CD4-positive, alpha-beta memory T cell (primary cell): ENCODE measurements at regions of chr4 and their contacts with region 1.

Region 1: DNA sequence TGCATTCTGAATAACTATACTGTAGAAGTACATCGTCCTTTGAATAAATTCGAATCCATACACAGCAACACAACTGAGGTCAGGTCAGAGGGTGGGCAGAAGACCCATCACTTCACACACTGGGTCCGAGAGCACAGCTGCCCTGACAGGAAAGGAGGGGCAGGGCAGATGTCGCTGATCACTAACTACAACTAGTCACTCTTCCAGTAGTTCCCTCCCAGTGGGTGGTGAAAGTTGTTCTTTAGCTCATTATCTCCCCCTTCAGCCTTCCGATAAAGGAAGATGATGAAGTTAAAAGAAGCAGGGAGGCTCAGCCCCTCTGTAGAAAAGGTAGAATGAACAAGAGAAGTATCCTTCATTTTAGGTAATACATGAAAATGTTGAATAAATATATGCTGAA is 278.9 kb downstream of the INPP4B start:
- DNase-seq: peak; percentile 69 to 74 (median 72)
- H3K4me3 ChIP-seq: peak overlapping the region; percentile 57 to 84
- H3K4me3 Mint-ChIP-seq: peak overlapping the region; percentile 80 to 97 (median 92)
- H3K27ac ChIP-seq: peak overlapping the region; percentile 75
- H3K27ac Mint-ChIP-seq: peak overlapping the region; percentile 86 to 98 (median 96)
- H3K4me1 ChIP-seq: peaks cover 73% of the 10 kb centered on the region
- H3K4me1 Mint-ChIP-seq: peaks cover 40 to 85% (median 50%) of the 10 kb centered on the region in 4 donors
- H3K27me3 ChIP-seq: no peaks in the 10 kb centered on the region
- H3K27me3 Mint-ChIP-seq: no peaks in the 10 kb centered on the region

Region 2: DNA sequence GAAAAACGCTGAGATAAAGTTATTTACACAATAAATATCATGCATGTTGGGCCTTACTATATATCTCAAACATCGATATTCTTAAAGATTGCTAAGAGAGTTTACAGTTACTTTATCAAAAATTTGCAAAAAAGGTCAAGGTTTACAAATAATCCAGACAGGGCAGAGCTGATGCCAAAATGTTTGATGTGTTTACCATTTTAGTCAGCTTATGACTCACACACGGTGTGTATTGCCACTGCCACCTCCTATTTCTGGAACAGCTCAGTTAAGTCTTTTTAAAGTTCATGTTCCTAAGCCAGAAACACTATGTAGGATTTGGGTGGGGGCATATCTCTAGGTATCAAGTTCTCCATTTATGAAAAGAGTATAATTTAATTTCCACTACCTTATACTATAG is 301.7 kb before region 1 on chr4:
- CTCF ChIA-PET with region 1: no interaction called
- POLR2A ChIA-PET with region 1: interaction called, 3 read pairs
- intact Hi-C with region 1: loop called (anchors 5 kb)
- DNase-seq: no peak
- H3K4me3 ChIP-seq: no peak overlapping the region
- H3K4me3 Mint-ChIP-seq: peak overlapping the region in 5 of 8 donors; percentile 13 to 78 (median 46)
- H3K27ac ChIP-seq: no peak overlapping the region
- H3K27ac Mint-ChIP-seq: peak overlapping the region; percentile 33 to 87 (median 78)
- H3K4me1 ChIP-seq: peaks cover 70% of the 10 kb centered on the region
- H3K4me1 Mint-ChIP-seq: peaks cover 63 to 93% (median 78%) of the 10 kb centered on the region in 4 donors
- H3K27me3 ChIP-seq: no peaks in the 10 kb centered on the region
- H3K27me3 Mint-ChIP-seq: no peaks in the 10 kb centered on the region

Region 3: GRCh38 chr4:142372530-142373260 is 194.5 kb before region 1 on chr4:
- CTCF ChIA-PET with region 1: interaction called, 4 read pairs
- POLR2A ChIA-PET with region 1: interaction called, 13 read pairs
- intact Hi-C with region 1: no loop called
- DNase-seq: no peak
- H3K4me3 ChIP-seq: no peak overlapping the region
- H3K4me3 Mint-ChIP-seq: peak overlapping the region in 7 of 8 donors; percentile 8 to 81 (median 61)
- H3K27ac ChIP-seq: peak overlapping the region; percentile 7
- H3K27ac Mint-ChIP-seq: peak overlapping the region; percentile 5 to 88 (median 75)
- H3K4me1 ChIP-seq: peaks cover 98% of the 10 kb centered on the region
- H3K4me1 Mint-ChIP-seq: peaks cover 69 to 86% (median 77%) of the 10 kb centered on the region in 4 donors
- H3K27me3 ChIP-seq: no peaks in the 10 kb centered on the region
- H3K27me3 Mint-ChIP-seq: no peaks in the 10 kb centered on the region

Region 4: GRCh38 chr4:142405021-142405694 is 162.0 kb before region 1 on chr4:
- CTCF ChIA-PET with region 1: interaction called, 24 read pairs
- POLR2A ChIA-PET with region 1: interaction called, 85 read pairs
- intact Hi-C with region 1: loop called (anchors 1 kb)
- DNase-seq: peak; percentile 64 to 81 (median 68)
- H3K4me3 ChIP-seq: peak overlapping the region; percentile 69 to 70
- H3K4me3 Mint-ChIP-seq: peak overlapping the region; percentile 95 to 100 (median 98)
- H3K27ac ChIP-seq: peak overlapping the region; percentile 72
- H3K27ac Mint-ChIP-seq: peak overlapping the region; percentile 91 to 98 (median 95)
- H3K4me1 ChIP-seq: peaks cover 38% of the 10 kb centered on the region
- H3K4me1 Mint-ChIP-seq: peaks cover 26 to 72% (median 36%) of the 10 kb centered on the region in 4 donors
- H3K27me3 ChIP-seq: no peaks in the 10 kb centered on the region
- H3K27me3 Mint-ChIP-seq: no peaks in the 10 kb centered on the region

Region 5: DNA sequence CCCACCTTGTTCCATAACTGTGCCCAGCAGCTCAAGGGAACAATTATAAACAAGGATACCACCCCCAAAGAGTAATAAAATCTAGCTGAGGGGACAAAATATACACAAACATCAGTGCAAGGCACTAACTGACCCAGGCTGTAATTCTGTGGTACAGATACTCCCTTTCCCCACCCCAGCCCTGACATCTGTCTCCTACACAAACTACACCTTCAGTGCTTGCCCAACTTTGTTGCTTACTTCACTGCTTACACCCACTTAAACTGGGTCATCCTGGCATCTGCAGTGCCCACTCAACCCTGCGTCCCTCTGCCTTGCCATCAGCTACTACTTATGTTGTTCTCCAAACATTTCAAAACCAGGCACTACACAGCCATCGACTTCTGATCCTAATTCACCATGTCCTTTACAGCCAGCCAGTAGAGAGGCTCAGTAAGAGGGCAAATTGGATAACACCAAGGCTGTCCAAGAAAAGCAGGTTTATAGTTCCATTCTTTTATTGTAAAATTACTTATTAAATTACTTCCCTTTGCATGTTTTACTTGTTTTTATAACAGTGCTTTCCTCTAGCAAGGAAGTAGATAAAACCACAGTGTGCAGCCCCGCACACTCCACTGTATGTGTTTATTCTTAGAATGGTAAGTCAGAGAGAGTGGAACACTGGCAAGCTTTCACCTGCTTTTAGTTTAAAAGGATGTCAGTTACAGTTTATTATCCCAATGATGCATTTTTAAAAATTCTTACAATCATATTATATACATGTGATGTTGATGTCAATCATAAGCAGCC is 129.3 kb after region 1 on chr4:
- CTCF ChIA-PET with region 1: interaction called, 7 read pairs
- POLR2A ChIA-PET with region 1: interaction called, 166 read pairs
- intact Hi-C with region 1: loop called (anchors 2 kb)
- DNase-seq: peak in 4 of 5 donors; percentile 15 to 26 (median 22)
- H3K4me3 ChIP-seq: peak overlapping the region in 1 of 2 donors; percentile 22
- H3K4me3 Mint-ChIP-seq: peak overlapping the region in 7 of 8 donors; percentile 59 to 86 (median 73)
- H3K27ac ChIP-seq: peak overlapping the region; percentile 34
- H3K27ac Mint-ChIP-seq: peak overlapping the region in 6 of 7 donors; percentile 89 to 98 (median 95)
- H3K4me1 ChIP-seq: peaks cover 69% of the 10 kb centered on the region
- H3K4me1 Mint-ChIP-seq: peaks cover 53 to 69% (median 58%) of the 10 kb centered on the region in 4 donors
- H3K27me3 ChIP-seq: no peaks in the 10 kb centered on the region
- H3K27me3 Mint-ChIP-seq: no peaks in the 10 kb centered on the region

Region 6: DNA sequence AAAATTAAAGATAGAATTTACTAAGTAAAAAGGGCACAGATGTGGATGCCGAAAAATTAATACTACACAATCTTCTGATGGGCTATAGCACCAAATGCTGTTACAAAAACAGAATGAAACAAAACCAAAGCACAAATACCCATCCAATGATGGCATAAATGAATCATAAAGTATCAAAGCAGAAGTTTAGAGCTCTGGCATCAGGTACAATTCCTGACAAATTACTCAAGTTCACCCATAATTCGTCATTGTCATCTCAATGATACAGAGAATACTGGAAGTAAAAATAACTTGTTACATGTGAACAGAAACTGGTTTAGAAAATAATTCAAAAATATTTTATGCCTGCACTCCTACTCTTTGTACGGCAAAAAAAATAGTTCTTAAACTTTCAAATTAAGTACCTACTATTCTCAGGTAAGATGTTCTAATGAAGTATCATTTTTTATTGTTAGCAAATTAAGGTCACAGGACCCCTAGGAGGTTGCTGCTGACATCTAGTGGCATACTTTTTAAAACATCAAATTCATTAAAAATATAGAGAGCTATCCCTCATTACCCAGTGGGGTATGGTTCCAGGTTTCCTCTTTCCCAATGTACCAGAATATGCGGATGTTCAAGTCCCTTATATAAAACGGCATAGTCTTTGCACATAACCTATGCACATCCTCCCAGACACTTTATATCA is 152.8 kb after region 1 on chr4:
- CTCF ChIA-PET with region 1: interaction called, 23 read pairs
- POLR2A ChIA-PET with region 1: interaction called, 16 read pairs
- intact Hi-C with region 1: loop called (anchors 1 kb)
- DNase-seq: peak in 4 of 5 donors; percentile 54 to 60 (median 57)
- H3K4me3 ChIP-seq: no peak overlapping the region
- H3K4me3 Mint-ChIP-seq: peak overlapping the region in 5 of 8 donors; percentile 19 to 62 (median 49)
- H3K27ac ChIP-seq: no peak overlapping the region
- H3K27ac Mint-ChIP-seq: peak overlapping the region in 5 of 7 donors; percentile 36 to 77 (median 69)
- H3K4me1 ChIP-seq: peaks cover 14% of the 10 kb centered on the region
- H3K4me1 Mint-ChIP-seq: peaks cover 11 to 26% (median 13%) of the 10 kb centered on the region in 4 donors
- H3K27me3 ChIP-seq: no peaks in the 10 kb centered on the region
- H3K27me3 Mint-ChIP-seq: peaks cover 0 to 1% of the 10 kb centered on the region in 2 donors